Activated CD4-positive, alpha-beta T cell treated with anti-CD3 and anti-CD28 coated beads, Interleukin-2, amount 10 ng/mL, durations not matched to agents 24 days and 14 days (primary cell): ENCODE measurements at regions of chr1 and their contacts with region 1.

Region 1: DNA sequence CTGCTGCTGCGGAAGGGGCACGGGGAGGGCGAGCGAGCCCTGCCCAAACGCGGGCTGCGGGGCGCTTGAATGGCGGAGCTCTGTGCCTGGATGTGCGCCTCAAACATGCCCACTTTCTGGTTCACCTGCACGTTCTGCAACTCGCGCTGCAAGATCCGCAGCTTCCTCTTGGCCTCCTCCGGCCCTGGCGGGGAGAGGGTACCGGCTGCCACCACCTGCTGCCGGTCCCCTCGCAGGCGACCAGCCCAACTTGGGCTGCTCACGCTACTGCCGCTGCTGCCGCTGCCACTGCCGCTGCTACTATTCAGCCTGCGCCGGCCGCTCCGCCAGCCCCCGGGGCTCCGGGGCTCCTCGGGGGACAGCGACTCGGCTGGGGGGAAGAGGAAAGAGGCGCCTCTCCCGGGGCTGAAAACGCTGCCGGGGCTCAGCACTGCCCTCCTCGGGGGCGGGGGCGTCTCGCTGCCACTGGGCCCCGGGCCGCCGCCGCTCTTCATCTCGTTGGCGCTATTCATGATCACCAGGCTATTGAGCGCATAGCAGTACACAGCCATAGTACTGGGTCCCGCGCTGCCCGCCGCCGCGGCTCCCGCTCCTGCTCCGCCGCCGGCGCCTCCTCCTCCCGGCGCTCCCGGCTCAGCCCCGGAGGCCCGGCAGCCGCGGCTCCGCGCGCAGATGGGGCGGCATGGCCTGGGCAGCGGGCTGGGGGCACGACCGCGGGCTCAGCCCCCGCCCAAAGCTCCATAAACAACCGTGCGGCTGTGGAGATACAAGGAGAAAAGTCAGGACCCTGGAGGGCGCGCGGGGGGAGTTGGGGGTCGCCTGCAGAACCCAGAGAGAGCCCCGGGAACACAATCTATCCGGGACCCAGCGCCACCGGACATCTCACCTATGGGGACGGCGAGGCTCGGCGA is 1.9 kb downstream of the ITPKB start:
- DNase-seq: peak; percentile 86
- H3K4me3 Mint-ChIP-seq: peak overlapping the region; percentile 84
- H3K27ac Mint-ChIP-seq: peak overlapping the region; percentile 94
- H3K4me1 Mint-ChIP-seq: peaks cover 45% of the 10 kb centered on the region
- H3K27me3 Mint-ChIP-seq: no peaks in the 10 kb centered on the region

Region 2: DNA sequence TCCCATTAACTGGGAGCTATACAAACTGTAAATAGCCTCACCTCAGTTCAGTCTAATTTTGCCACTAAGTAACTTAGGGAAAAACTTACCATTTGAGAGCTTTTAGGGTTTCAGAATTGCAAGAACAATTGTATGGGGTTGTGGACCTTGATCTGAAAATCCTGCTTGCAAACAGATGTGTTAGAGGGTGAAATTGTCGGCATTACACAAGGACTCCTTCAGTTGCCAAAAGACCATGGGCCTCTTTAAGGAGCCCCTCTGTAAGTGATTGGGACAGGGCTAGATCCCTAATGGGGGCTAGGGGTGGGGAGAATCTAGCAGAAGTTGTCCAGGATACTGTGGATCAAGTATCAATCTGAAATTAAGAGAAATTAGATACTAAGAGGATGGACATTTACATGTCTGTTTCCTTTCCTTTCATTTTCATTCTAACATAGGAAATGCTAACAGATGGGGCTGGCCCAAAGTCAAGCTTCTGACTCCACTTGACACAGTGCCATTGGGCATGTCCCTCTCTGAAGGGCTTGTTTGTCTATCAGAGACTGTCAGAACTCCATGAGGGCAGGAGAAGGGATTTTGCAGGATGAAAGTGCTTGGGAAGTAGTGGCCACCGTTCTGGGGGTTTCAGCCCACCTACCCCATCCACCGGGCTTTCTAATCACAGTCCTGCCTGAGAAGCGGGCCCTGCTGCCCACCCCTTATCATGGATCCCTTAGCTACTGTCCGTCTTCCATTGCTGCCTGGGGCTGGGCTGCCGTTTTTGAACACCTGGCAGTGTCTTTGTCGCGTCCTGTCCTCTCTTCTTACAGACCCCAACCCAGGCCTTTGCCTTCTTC is 133.9 kb before region 1 on chr1:
- intact Hi-C with region 1: no loop called
- DNase-seq: no peak
- H3K4me3 Mint-ChIP-seq: no peak overlapping the region
- H3K27ac Mint-ChIP-seq: no peak overlapping the region
- H3K4me1 Mint-ChIP-seq: peaks cover 3% of the 10 kb centered on the region
- H3K27me3 Mint-ChIP-seq: peaks cover 3% of the 10 kb centered on the region

Region 3: GRCh38 chr1:226626577-226626956 is 110.6 kb before region 1 on chr1:
- intact Hi-C with region 1: loop called (anchors 1 kb)
- DNase-seq: peak; percentile 94
- H3K4me3 Mint-ChIP-seq: peak overlapping the region; percentile 35
- H3K27ac Mint-ChIP-seq: peak overlapping the region; percentile 88
- H3K4me1 Mint-ChIP-seq: peaks cover 21% of the 10 kb centered on the region
- H3K27me3 Mint-ChIP-seq: peaks cover 8% of the 10 kb centered on the region

Region 4: DNA sequence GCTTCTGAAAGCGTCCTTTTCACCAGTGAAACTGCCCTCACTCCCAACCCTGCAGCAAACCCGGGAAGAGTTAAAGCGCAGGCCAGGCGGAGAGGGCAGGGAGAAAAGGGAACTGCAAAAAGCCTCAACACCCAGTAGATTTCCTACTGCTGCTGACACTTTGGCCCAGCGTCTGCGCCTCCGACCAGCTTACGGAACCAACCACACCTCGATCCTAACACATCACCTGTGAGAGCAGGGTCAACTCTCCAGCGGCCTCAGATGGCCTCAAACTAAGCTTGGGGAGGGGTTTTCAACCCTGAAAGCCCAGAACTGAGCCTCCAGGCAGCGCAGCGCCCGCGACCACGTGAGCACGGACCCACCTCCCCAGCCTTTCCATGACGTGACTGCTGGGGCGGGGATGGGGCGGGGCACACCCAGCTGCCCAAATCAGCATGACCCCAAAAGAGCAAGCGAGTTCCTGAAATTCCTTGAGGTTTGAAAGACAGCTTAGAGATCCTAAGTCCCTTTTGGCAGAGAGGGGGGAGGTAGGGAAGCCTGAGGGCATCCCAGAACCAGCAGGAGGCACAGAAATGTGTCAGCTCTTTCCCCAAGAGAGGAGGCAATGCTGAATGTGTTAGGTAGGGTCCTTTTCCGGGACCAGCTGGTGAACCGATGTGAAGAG is 57.2 kb before region 1 on chr1:
- intact Hi-C with region 1: loop called (anchors 1 kb)
- DNase-seq: peak; percentile 92
- H3K4me3 Mint-ChIP-seq: peak overlapping the region; percentile 82
- H3K27ac Mint-ChIP-seq: peak overlapping the region; percentile 96
- H3K4me1 Mint-ChIP-seq: peaks cover 86% of the 10 kb centered on the region
- H3K27me3 Mint-ChIP-seq: no peaks in the 10 kb centered on the region

Region 5: GRCh38 chr1:226708342-226708780 is 28.8 kb before region 1 on chr1:
- intact Hi-C with region 1: loop called (anchors 1 kb)
- DNase-seq: no peak
- H3K4me3 Mint-ChIP-seq: peak overlapping the region; percentile 71
- H3K27ac Mint-ChIP-seq: peak overlapping the region; percentile 93
- H3K4me1 Mint-ChIP-seq: peaks cover 69% of the 10 kb centered on the region
- H3K27me3 Mint-ChIP-seq: no peaks in the 10 kb centered on the region

Region 6: GRCh38 chr1:226882631-226883409 is 145.7 kb after region 1 on chr1:
- intact Hi-C with region 1: loop called (anchors 2 kb)
- DNase-seq: peak; percentile 84
- H3K4me3 Mint-ChIP-seq: peak overlapping the region; percentile 72
- H3K27ac Mint-ChIP-seq: peak overlapping the region; percentile 95
- H3K4me1 Mint-ChIP-seq: peaks cover 53% of the 10 kb centered on the region
- H3K27me3 Mint-ChIP-seq: no peaks in the 10 kb centered on the region